ENCODE measurements at regions of chr6 and their contacts with region 1.

Region 1: GRCh38 chr6:136792410-136793262 is at the start of gene MAP3K5:
- DNase-seq: peak; percentile 76 to 96 (median 90)

Region 2: GRCh38 chr6:136289579-136290409 is 502.8 kb before region 1 on chr6 and contains the start of gene BCLAF1:
- intact Hi-C with region 1: loop called (anchors 10 kb)
- DNase-seq: peak; percentile 99 to 100 (median 100)

Region 3: DNA sequence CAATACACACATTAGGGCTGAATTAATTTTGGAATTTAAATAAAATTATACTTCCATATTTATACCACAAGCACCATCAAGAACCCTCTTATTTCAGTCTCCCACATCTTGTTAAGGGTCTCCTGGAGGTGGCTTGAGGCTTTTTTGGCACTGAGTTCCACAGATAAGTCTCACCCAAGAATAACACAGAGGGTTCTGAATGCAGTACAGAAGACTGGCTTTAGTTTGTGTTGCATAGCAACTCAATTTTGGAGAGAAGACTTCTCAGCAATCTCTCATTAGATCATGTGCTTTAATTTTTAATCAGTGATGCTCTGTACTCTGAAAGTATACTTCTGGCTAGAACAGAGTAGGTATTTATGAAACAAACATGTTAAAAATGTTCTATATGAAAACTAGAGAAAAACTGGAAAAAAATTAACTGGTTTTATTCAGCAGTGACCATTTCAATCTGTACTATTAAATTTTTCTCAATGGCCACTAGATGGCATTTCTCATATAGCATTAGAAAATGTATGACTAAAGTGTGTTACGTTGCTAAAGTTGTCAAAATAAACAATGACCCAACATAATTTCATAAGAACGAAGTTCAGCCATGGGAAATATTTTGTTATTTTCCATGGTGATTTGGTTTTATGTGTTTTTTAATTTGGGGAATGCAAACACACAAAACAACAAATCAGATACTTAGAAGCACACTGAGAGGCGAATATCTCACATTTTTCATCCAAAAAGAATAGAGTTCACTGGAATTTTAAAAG is 209.7 kb before region 1 on chr6:
- intact Hi-C with region 1: loop called (anchors 10 kb)
- DNase-seq: no peak

Region 4: DNA sequence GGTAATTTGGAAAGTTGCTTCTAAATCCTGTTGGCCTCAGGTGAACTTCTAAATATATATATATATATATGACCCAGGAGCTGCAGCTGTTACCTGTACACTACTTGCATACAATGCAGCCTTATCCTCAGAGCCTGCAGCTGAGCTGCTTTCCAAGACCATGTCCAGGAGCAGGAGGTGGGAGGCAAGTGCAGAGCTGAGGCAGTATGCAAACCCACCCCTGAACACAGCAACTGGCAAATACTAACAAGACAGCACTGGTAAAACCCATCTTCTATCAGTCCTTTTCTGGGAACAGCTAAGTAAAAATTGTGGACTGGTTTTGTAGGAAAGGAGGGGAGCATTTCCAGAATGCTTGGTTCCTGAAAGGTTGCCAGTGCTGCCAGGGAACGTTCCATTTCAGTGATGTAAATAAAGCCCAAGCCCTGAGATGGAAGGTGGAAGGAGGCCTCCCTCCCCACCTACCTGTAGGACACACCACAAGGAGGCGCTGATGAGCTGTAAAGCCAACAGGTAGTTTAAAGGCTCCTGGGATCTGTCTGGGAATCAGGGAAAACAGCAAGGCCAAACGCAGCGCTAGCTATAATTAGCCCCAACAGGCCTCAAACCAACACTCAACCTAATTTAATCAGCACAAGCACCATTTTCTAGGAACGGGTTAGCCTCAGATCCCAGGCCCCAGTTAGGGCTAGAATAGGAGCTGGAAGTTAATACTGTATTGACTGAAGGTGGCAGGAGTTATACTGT is 148.6 kb before region 1 on chr6:
- intact Hi-C with region 1: loop called (anchors 2 kb)
- DNase-seq: peak; percentile 51 to 88 (median 76)

Region 5: DNA sequence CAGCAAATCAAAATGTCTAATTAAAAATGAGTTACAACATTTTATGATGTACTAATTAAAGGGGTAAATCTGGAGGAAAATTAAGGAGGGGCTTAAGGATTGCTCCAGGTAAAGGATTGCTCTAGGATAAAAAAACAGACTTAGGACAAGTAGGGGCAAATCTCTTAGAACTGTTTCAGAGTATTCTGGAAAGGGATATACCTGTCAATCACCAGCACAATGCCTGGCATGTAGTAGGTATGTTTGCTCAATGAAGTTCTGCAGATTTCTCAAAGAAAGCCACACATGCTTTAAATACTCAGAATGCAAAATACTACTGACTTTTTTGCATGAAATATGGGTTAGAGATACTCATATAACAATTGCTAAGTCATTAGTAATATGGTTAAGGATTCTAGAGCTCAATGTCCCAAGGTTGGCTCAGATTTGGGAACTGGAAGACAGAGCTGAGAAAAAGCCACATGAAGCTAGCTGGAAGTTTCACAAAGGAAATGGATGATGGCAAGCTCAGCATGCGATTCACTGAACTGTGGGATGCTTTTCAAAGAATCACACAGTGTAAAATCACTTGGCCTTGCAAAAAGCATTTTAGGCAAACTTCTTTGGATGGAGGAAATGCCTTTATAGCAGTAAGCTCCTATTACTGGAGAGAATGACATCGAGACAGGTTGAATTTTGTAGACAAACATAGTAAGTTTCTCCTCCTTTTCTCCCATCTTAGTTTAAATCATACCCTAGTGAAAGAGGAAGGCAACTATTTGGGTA is 73.2 kb before region 1 on chr6:
- intact Hi-C with region 1: loop called (anchors 1 kb)
- DNase-seq: peak in 9 of 42 donors; percentile 17 to 49 (median 26)

Region 6: DNA sequence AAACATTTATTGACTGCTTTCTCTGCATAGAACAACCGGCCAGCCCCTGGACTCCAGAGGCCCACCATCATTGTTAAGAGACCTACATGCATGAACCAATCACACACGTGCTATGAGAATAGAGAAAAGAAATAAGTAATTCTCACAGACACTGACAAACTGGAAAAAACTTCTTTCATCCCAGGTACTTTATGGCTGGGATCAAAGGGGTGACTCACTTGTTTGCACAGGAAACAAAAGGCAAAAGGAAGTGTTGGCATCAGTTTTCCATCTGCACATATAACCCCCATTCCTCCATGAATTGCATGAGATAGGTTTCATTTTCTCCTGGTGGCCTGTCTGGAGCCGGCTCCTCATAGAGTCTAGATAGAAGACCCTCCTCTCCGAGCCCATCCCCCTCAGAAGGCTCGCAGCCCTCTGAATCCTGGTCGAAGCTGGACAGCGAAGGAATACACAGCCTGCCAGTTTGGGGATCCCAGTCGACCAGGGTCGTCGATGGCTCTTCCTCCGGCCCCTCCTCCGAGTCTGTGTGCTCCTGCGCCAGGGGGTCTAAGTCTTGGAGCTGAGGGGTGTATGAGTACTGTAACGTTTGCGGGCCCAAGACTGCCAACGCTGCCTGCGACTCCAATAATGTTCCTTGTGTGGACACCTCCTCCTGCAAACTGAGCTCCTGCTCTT is 208.8 kb after region 1 on chr6:
- intact Hi-C with region 1: no loop called
- DNase-seq: no peak

Measured in head of caudate nucleus (tissue), 42 donors.